HAP-1 (cell line): ENCODE measurements at regions of chr10 and their contacts with region 1.

Region 1: GRCh38 chr10:104349623-104350126 is 4.0 kb upstream of the CFAP58 start:
- DNase-seq: no peak
- H3K4me3 ChIP-seq: no peak overlapping the region
- H3K4me1 ChIP-seq: peaks cover 7% of the 10 kb centered on the region
- H3K27me3 ChIP-seq: peaks cover 5% of the 10 kb centered on the region; the same call in 1 of the 2 replicates

Region 2: GRCh38 chr10:104268716-104269645 is 80.7 kb before region 1 on chr10 and contains the start of gene GSTO2:
- in situ Hi-C with region 1: no loop called
- DNase-seq: peak; percentile 96 to 99
- H3K4me3 ChIP-seq: peak within 1 kb of the TSS; percentile 77
- H3K4me1 ChIP-seq: peaks cover 5% of the 10 kb centered on the region; the same call in 1 of the 2 replicates
- H3K27me3 ChIP-seq: no peaks in the 10 kb centered on the region

Region 3: GRCh38 chr10:104300736-104301292 is 48.9 kb before region 1 on chr10:
- in situ Hi-C with region 1: loop called (anchors 5 kb)
- DNase-seq: no peak
- H3K4me3 ChIP-seq: no peak overlapping the region
- H3K4me1 ChIP-seq: 0 out of 2 replicates have a peak, but pooled peaks cover under 1% of the 10 kb centered on the region
- H3K27me3 ChIP-seq: peaks cover 17% of the 10 kb centered on the region

Region 4: GRCh38 chr10:104666106-104666505 is 316.4 kb after region 1 on chr10:
- in situ Hi-C with region 1: no loop called
- DNase-seq: no peak
- H3K4me3 ChIP-seq: no peak overlapping the region
- H3K4me1 ChIP-seq: no peaks in the 10 kb centered on the region
- H3K27me3 ChIP-seq: no peaks in the 10 kb centered on the region